ENCODE measurements at regions of chr5 and their contacts with region 1.

Region 1: GRCh38 chr5:75336625-75337339 is at the start of gene HMGCR:
- DNase-seq: peak; percentile 99 to 100
- H3K4me3 ChIP-seq: peak within 1 kb of the TSS; percentile 89
- H3K4me3 Mint-ChIP-seq: no peak within 1 kb of the TSS
- H3K27ac Mint-ChIP-seq: no peak within 1 kb of the TSS
- H3K4me1 ChIP-seq: peaks cover 28% of the 10 kb centered on the region
- H3K4me1 Mint-ChIP-seq: peaks cover 14% of the 10 kb centered on the region
- H3K27me3 ChIP-seq: no peaks in the 10 kb centered on the region
- H3K27me3 Mint-ChIP-seq: no peaks in the 10 kb centered on the region
- CTCF ChIP-seq: peak in 1 of 2 experiments; percentile 59
- total RNA-seq, gene HMGCR: 164 and 167 TPM in 2 replicates

Region 2: DNA sequence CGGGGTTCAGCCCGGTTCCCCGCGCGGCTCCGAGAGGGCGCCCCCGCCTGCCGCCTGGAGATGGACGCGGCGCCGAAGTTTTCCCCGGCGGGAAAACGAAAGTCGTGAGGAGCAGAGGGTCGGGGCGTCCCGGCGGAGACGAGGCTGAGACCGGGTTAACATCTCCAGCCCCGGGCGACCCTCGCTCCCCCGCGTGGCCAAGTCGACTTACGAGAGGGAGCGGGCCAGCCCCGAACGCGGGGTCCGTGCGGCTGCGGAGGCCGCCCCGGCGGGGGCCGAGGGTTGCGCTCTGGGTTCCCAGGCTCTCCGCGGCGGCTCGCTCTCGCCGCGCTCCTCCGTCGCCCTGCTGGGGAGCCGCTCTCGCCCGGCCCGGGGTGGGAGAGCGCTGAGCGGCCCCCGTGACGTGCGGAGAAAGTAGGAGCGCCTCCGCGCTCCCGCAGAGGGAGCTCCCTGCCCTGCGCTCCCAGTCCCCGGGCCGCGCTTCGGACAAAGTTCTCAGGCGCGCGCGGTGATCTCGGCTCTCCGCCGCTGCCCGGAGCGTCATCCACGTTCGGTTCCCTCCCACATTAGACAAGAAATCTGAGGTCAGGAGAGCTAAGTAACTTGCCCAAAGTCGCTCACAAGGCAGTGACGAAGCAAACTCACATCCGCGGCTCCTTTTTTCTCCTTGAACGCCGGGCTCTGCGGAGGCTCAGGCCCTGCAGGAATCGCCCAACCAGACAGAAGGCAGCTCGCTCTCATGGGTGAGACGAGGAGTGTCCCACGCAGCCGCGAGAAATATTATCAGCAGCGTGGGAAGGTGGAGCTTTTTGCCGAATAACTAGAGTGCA is 283.3 kb before region 1 on chr5:
- CTCF ChIA-PET with region 1: interaction called, 4 read pairs
- POLR2A ChIA-PET with region 1: interaction called, 11 read pairs
- intact Hi-C with region 1: loop called (anchors 5 kb)
- DNase-seq: peak; percentile 68 to 80
- H3K4me3 ChIP-seq: peak overlapping the region; percentile 81
- H3K4me3 Mint-ChIP-seq: peak overlapping the region; percentile 86
- H3K27ac Mint-ChIP-seq: peak overlapping the region; percentile 67
- H3K4me1 ChIP-seq: peaks cover 34% of the 10 kb centered on the region
- H3K4me1 Mint-ChIP-seq: peaks cover 35% of the 10 kb centered on the region
- H3K27me3 ChIP-seq: no peaks in the 10 kb centered on the region; the same call in 1 of the 2 replicates
- H3K27me3 Mint-ChIP-seq: no peaks in the 10 kb centered on the region
- CTCF ChIP-seq: peak; percentile 15 to 17

Region 3: GRCh38 chr5:75260708-75261107 is 76.1 kb before region 1 on chr5:
- CTCF ChIA-PET with region 1: interaction called, 13 read pairs
- POLR2A ChIA-PET with region 1: interaction called, 4 read pairs
- intact Hi-C with region 1: loop called (anchors 2 kb)
- DNase-seq: peak; percentile 58 to 65
- H3K4me3 ChIP-seq: no peak overlapping the region
- H3K4me3 Mint-ChIP-seq: peak overlapping the region; percentile 6
- H3K27ac Mint-ChIP-seq: no peak overlapping the region
- H3K4me1 ChIP-seq: peaks cover 26% of the 10 kb centered on the region
- H3K4me1 Mint-ChIP-seq: peaks cover 17% of the 10 kb centered on the region
- H3K27me3 ChIP-seq: no peaks in the 10 kb centered on the region
- H3K27me3 Mint-ChIP-seq: no peaks in the 10 kb centered on the region
- CTCF ChIP-seq: no peak

Region 4: DNA sequence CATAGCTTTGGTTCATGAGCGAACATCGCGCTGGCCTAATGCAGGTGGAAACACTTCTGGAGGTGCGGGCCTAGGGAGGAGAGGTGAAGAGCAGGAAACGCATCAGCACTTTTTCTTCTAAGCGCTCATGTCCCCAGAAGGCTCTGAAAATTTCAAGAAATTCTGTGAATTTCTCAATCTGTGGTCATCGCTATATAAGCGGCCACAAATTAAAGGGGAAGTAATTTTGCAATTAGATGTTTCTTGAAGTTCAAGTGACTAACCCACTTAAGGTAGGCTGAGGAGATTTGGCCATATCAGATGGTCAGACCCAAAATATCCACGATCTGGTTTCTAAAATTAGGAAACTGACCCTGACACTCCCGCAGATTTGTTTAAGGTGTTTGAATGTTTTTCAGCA is 16.4 kb before region 1 on chr5:
- CTCF ChIA-PET with region 1: interaction called, 14 read pairs
- POLR2A ChIA-PET with region 1: interaction called, 5 read pairs
- intact Hi-C with region 1: no loop called
- DNase-seq: no peak
- H3K4me3 ChIP-seq: no peak overlapping the region
- H3K4me3 Mint-ChIP-seq: no peak overlapping the region
- H3K27ac Mint-ChIP-seq: peak overlapping the region; percentile 43
- H3K4me1 ChIP-seq: peaks cover 25% of the 10 kb centered on the region
- H3K4me1 Mint-ChIP-seq: peaks cover 28% of the 10 kb centered on the region
- H3K27me3 ChIP-seq: no peaks in the 10 kb centered on the region
- H3K27me3 Mint-ChIP-seq: no peaks in the 10 kb centered on the region
- CTCF ChIP-seq: no peak

Region 5: GRCh38 chr5:75511435-75512384 is 174.9 kb after region 1 on chr5 and contains the starts of genes CERT1 and POLK:
- CTCF ChIA-PET with region 1: no interaction called
- POLR2A ChIA-PET with region 1: interaction called, 5 read pairs
- intact Hi-C with region 1: loop called (anchors 5 kb)
- DNase-seq: peak; percentile 98 to 99
- H3K4me3 ChIP-seq: peak within 1 kb of the TSS; percentile 98
- H3K4me3 Mint-ChIP-seq: peak within 1 kb of the TSS; percentile 100
- H3K27ac Mint-ChIP-seq: peak within 1 kb of the TSS; percentile 91
- H3K4me1 ChIP-seq: peaks cover 5% of the 10 kb centered on the region
- H3K4me1 Mint-ChIP-seq: peaks cover 15% of the 10 kb centered on the region
- H3K27me3 ChIP-seq: no peaks in the 10 kb centered on the region
- H3K27me3 Mint-ChIP-seq: no peaks in the 10 kb centered on the region
- CTCF ChIP-seq: no peak
- total RNA-seq, gene CERT1: 42.7 and 44.3 TPM in 2 replicates
- total RNA-seq, gene POLK: 7.5 and 11.1 TPM in 2 replicates

Measured in Caco-2 (cell line).